ENCODE measurements at regions of chr19 and their contacts with region 1.

Region 1: GRCh38 chr19:55348317-55349034 is 6.0 kb downstream of the COX6B2 start:
- DNase-seq: peak; percentile 50
- ATAC-seq: peak; percentile 38
- H3K4me3 Mint-ChIP-seq: peak overlapping the region; percentile 52
- H3K27ac Mint-ChIP-seq: peak overlapping the region; percentile 96
- H3K4me1 Mint-ChIP-seq: peaks cover 57% of the 10 kb centered on the region
- H3K27me3 Mint-ChIP-seq: peaks cover 32% of the 10 kb centered on the region
- CTCF ChIP-seq: no peak

Region 2: GRCh38 chr19:55113570-55114039 is 234.9 kb before region 1 on chr19:
- CTCF ChIA-PET with region 1: no interaction called
- POLR2A ChIA-PET with region 1: no interaction called
- DNase-seq: peak; percentile 79
- ATAC-seq: no peak
- H3K4me3 Mint-ChIP-seq: no peak overlapping the region
- H3K27ac Mint-ChIP-seq: peak overlapping the region; percentile 53; the same call in 1 of the 2 replicates
- H3K4me1 Mint-ChIP-seq: peaks cover 26% of the 10 kb centered on the region
- H3K27me3 Mint-ChIP-seq: no peaks in the 10 kb centered on the region
- CTCF ChIP-seq: no peak

Region 3: DNA sequence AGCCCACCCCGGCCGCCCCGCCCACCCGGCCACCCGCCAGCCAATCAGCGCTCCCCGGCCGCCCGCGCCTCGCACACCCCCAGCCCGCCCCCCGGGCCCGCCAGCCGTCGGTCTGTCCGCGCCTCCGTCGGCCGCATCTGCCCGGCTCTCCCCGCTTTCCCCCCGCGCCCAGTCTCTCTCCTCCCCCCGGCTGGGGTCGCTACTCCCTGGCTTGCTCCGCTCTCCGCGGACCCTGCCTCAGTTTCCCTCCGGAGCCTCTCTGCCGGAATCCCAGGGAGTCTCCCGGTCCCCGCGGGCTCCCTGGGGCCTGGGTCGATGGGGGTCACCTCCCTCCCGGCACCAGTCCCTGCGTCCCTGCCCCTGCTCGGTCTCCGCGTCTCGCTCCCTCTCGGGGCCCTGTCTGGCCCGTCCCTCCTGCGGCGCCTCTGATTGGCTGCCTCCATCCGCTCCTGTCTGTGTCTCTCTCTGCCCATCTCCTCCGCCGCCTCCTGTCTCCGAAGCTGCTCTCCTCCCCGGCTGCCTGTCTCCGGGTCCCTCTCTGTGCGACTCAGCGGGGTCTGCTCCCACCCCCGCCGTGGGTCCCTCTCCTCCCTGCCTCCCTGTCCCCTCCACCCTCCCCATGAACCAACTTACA is 21.3 kb after region 1 on chr19:
- CTCF ChIA-PET with region 1: interaction called, 13 read pairs
- POLR2A ChIA-PET with region 1: interaction called, 15 read pairs
- DNase-seq: peak; percentile 82
- ATAC-seq: peak; percentile 76
- H3K4me3 Mint-ChIP-seq: peak overlapping the region; percentile 83
- H3K27ac Mint-ChIP-seq: no peak overlapping the region; the same call in 1 of the 2 replicates
- H3K4me1 Mint-ChIP-seq: peaks cover 19% of the 10 kb centered on the region
- H3K27me3 Mint-ChIP-seq: peaks cover 75% of the 10 kb centered on the region
- CTCF ChIP-seq: no peak

Measured in WTC11 (cell line).